ENCODE measurements at regions of chr11 and their contacts with region 1.

Region 1: DNA sequence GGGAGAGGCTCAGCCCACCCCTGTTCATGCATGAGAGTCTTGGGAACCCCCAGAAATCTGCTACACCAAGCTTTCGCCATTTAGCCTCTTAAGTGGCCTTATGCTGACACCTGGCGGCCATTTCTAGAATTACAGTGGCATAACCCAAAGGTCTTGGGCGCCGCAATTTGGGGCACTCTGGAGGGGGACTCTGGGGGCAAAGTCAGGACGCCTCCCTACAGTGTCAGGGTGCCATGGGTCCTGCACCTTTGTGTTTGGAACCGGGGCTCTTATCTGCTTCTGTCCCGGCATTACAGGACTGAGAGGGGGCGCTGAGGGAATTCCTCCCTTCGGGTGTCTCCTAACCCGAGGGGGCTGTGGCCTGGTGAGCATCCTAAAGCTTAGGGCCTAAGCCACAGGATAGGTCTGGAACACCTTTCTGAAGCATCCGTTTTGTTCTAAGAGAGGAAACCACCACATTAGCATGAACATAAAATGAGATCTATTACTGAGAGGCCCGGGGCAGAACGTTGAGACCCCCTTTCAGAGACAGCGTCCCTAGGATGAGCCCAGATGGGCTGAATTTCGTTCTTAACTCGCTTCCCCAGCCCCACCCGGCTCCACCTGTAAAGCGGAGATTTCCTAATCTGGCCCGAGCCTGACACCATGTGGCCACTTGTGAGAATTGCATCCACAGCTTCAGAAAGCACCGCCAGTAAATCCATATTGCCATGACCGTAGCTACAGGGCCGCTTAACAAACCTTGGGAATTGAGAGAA is 9.3 kb downstream of the INS start:
- DNase-seq: peak; percentile 78
- H3K4me3 Mint-ChIP-seq: no peak overlapping the region
- H3K27ac Mint-ChIP-seq: no peak overlapping the region
- H3K4me1 Mint-ChIP-seq: no peaks in the 10 kb centered on the region
- H3K27me3 Mint-ChIP-seq: peaks cover 43% of the 10 kb centered on the region
- CTCF ChIP-seq: peak; percentile 79

Region 2: DNA sequence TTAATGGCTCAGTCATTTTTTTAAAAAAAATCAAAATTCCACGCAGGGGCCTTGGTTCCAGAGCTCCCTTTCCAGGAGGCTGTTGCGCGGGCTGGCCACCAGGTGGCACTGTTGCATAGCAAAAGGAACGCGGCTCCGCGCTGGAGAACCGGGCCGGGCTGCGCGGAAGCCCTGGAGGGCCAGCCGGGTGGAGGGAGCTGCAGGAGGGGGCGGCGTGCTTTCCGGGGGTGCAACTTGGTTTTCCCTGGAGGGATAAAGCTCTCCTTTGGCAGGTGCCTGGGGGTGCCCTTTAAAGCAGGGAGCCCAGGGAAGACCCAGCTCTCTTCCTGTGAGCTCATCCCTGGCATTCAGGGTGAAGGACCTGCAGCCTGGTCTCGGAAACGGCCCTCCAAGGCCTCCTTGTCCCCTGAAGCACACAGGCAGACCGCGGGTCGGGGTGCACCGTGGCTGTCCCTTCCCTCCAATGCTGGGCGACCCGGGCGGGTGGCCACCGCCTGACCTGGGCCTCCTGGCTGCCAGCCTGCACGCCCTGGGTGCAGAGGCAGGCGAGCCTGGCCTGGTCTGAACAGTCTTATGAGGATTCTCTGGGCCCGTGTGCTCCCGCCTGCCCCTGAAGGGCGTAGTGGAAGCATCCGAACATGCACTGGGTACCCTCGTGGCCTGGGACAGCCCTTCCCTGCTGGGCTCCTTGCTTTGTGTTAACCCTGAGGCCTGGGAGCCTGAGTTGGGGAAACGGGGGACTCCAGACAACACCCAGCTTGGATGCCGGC is 498.7 kb before region 1 on chr11:
- CTCF ChIA-PET with region 1: interaction called, 165 read pairs
- POLR2A ChIA-PET with region 1: no interaction called
- intact Hi-C with region 1: loop called (anchors 2 kb)
- DNase-seq: peak; percentile 52
- H3K4me3 Mint-ChIP-seq: no peak overlapping the region
- H3K27ac Mint-ChIP-seq: no peak overlapping the region
- H3K4me1 Mint-ChIP-seq: peaks cover 4% of the 10 kb centered on the region
- H3K27me3 Mint-ChIP-seq: peaks cover under 1% of the 10 kb centered on the region
- CTCF ChIP-seq: peak; percentile 97

Region 3: DNA sequence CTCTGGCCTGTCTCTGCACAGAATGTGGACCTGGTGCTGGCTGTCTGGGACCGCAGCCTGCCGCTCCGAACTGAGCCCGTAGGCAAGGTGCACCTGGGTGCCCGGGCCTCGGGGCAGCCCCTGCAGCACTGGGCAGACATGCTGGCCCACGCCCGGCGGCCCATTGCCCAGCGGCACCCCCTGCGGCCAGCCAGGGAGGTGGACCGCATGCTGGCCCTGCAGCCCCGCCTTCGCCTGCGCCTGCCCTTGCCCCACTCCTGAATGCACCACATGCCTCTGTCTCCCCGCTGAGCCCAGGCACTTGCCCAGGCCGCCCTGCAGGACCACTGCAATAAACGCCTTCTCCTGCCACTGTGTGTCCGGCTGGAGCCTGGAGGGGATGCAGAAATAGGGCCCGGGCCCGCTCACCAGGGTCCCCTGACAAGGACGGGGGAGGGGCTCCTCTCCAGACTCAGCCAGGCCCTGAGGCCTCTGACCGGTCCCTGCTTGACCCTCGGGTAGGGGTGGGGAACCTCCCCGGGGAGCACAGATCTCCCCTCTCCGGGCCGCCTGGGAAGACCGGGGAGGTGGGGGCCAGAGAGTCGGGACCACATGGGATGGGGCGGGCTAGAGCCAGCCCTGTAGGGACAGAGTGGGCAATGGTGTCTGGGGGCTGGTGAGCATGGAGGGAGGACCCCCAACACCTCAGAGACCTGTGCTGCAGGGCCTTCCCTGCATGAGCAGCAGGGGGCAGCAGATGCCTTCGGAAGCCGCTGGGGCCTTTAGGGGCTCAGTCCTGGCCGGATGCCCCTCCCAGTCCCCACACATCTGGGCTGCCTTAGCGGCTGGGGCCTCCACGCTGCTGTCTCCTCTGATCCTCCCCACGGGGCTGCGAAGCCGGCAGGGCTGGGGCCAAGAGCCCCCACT is 314.3 kb before region 1 on chr11:
- CTCF ChIA-PET with region 1: interaction called, 14 read pairs
- POLR2A ChIA-PET with region 1: no interaction called
- intact Hi-C with region 1: loop called (anchors 2 kb)
- DNase-seq: peak; percentile 65
- H3K4me3 Mint-ChIP-seq: peak overlapping the region; percentile 78
- H3K27ac Mint-ChIP-seq: no peak overlapping the region
- H3K4me1 Mint-ChIP-seq: peaks cover 21% of the 10 kb centered on the region
- H3K27me3 Mint-ChIP-seq: no peaks in the 10 kb centered on the region
- CTCF ChIP-seq: peak; percentile 94

Region 4: DNA sequence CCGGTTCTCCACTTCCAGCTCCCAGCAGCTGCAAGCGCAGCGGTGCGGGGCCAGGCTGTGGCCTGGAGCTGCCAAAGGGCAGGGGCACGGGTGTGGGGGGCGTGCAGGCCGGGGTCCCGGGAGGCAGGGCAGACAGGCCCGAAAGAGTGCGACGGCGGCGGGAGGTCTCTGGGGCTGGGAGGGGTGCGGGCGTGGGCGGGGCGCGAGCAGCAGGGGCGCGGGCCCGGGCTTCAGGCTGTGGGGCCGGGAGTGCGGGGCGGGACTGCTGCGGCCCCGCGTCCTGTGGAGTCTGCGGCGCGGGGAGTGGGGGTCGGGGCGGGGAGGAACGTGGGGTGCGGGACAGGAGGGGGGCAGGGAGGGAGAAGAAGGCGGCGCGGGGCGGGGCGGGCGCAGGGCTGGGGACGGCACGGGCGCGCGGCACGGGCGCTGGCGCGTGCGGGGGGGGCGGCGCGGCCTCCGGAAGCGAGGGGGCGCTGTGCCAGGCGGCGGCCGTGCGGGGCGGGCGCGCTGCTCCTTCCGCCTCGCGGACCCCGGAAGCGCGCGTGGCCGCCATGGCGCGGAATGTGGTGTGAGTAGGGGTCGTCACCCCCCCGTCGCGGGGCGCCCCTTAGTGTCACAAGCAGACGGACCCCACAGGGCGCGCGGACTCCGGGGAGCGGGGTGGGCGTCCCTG is 204.7 kb before region 1 on chr11 and contains the start of gene MRPL23:
- CTCF ChIA-PET with region 1: interaction called, 30 read pairs
- POLR2A ChIA-PET with region 1: interaction called, 3 read pairs
- intact Hi-C with region 1: no loop called
- DNase-seq: no peak
- H3K4me3 Mint-ChIP-seq: no peak within 1 kb of the TSS
- H3K27ac Mint-ChIP-seq: no peak within 1 kb of the TSS
- H3K4me1 Mint-ChIP-seq: peaks cover 10% of the 10 kb centered on the region
- H3K27me3 Mint-ChIP-seq: no peaks in the 10 kb centered on the region
- CTCF ChIP-seq: no peak
- total RNA-seq, gene MRPL23: 89.2 and 98.0 TPM in 2 replicates

Region 5: GRCh38 chr11:2002807-2003206 is 148.9 kb before region 1 on chr11:
- CTCF ChIA-PET with region 1: interaction called, 26 read pairs
- POLR2A ChIA-PET with region 1: interaction called, 4 read pairs
- intact Hi-C with region 1: no loop called
- DNase-seq: no peak
- H3K4me3 Mint-ChIP-seq: no peak overlapping the region
- H3K27ac Mint-ChIP-seq: no peak overlapping the region
- H3K4me1 Mint-ChIP-seq: no peaks in the 10 kb centered on the region
- H3K27me3 Mint-ChIP-seq: no peaks in the 10 kb centered on the region
- CTCF ChIP-seq: no peak

Region 6: DNA sequence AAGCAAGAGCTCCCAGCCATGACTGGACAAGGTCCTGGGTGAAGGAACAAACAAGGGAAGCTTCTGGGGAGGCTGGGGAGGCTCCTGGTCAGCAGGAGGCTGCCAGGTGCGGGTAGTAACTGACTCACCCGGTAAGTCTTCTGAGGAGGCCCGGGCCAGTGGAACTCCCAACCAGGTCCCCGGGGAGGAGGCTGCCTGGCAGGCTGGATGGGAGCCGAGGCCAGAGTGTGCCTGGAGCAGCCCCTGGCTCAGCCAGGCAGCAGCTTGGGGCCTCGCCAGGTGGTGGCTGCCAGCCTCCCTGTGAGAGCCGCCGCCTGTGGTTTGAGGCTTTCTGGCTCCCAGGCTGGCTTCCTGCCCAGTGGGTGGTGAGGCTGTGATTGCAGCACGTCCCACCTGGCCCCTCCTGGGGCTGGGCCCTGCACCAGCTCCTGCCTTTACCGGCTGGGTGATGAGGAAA is 58.7 kb before region 1 on chr11:
- CTCF ChIA-PET with region 1: interaction called, 23 read pairs
- POLR2A ChIA-PET with region 1: interaction called, 3 read pairs
- intact Hi-C with region 1: no loop called
- DNase-seq: peak; percentile 99
- H3K4me3 Mint-ChIP-seq: peak overlapping the region; percentile 46
- H3K27ac Mint-ChIP-seq: peak overlapping the region; percentile 74
- H3K4me1 Mint-ChIP-seq: peaks cover 36% of the 10 kb centered on the region
- H3K27me3 Mint-ChIP-seq: no peaks in the 10 kb centered on the region
- CTCF ChIP-seq: no peak

Region 7: GRCh38 chr11:2269601-2270321 is 118.1 kb after region 1 on chr11:
- CTCF ChIA-PET with region 1: no interaction called
- POLR2A ChIA-PET with region 1: no interaction called
- intact Hi-C with region 1: no loop called
- DNase-seq: no peak
- H3K4me3 Mint-ChIP-seq: peak overlapping the region; percentile 71
- H3K27ac Mint-ChIP-seq: no peak overlapping the region
- H3K4me1 Mint-ChIP-seq: no peaks in the 10 kb centered on the region
- H3K27me3 Mint-ChIP-seq: peaks cover 11% of the 10 kb centered on the region
- CTCF ChIP-seq: no peak

Measured in MCF 10A (cell line).